ENCODE measurements at regions of chr17 and their contacts with region 1.

Region 1: GRCh38 chr17:56819431-56820145 is 14.1 kb downstream of the C17orf67 start:
- DNase-seq: peak; percentile 88
- H3K4me3 Mint-ChIP-seq: no peak overlapping the region
- H3K27ac Mint-ChIP-seq: no peak overlapping the region
- H3K4me1 Mint-ChIP-seq: peaks cover 8% of the 10 kb centered on the region
- H3K27me3 Mint-ChIP-seq: no peaks in the 10 kb centered on the region

Region 2: GRCh38 chr17:56737366-56738161 is 82.0 kb before region 1 on chr17:
- CTCF ChIA-PET with region 1: no interaction called
- intact Hi-C with region 1: no loop called
- DNase-seq: no peak
- H3K4me3 Mint-ChIP-seq: no peak overlapping the region
- H3K27ac Mint-ChIP-seq: no peak overlapping the region
- H3K4me1 Mint-ChIP-seq: no peaks in the 10 kb centered on the region
- H3K27me3 Mint-ChIP-seq: no peaks in the 10 kb centered on the region

Region 3: DNA sequence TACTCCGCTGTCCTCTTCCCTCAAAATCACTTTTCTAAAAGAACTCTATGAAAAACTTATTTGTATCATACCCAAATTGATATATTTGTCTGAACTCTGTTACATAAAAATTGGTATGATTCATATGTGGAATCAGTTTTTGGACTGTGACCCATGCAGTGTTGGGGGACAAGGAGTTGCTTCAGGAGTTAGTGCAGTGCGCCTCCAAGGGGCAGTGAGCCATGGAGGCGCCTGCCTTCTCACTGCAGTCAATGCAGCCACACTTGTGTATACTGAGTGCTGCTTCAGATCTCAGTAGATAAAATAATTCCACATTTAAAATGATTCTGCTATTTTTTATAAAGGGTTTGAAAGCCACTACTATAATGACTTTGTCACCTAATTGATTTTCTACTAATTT is 46.9 kb after region 1 on chr17:
- CTCF ChIA-PET with region 1: interaction called, 3 read pairs
- intact Hi-C with region 1: loop called (anchors 2 kb)
- DNase-seq: peak; percentile 15
- H3K4me3 Mint-ChIP-seq: no peak overlapping the region
- H3K27ac Mint-ChIP-seq: no peak overlapping the region
- H3K4me1 Mint-ChIP-seq: peaks cover 9% of the 10 kb centered on the region
- H3K27me3 Mint-ChIP-seq: no peaks in the 10 kb centered on the region

Region 4: DNA sequence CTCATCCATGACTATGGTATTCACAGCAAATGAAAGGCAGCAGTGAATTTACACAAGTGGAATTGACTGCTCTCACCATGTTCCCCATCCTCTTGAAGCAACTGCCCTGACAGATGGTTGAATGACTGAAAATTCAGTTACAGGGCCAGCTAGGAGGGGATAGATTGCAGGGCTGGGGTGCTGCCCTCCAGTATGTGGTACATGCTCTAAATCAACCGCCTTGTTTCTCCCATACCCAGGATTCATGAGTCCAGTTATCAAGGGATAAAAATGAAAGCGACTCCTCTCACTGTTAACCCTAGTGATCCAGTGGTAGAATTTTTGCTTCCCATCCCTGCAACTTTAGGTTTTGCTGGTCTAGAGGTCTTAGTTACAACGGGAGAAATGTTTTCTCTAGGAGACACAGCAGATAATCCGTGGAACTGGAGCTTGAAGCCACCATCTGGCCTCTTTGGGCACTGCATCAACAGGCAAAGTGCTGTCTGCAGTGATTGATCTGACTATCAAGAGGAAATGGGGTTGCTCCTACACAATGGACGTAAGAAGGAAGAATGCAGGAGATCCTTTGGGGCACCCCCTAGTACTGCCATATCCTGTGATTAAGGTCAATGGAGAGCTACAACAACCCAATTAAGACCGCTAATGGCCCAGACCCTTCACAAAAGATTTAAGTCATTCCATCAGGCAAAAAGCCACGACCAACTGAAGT is 190.3 kb after region 1 on chr17:
- CTCF ChIA-PET with region 1: interaction called, 7 read pairs
- intact Hi-C with region 1: loop called (anchors 1 kb)
- DNase-seq: peak; percentile 80
- H3K4me3 Mint-ChIP-seq: peak overlapping the region; percentile 1
- H3K27ac Mint-ChIP-seq: no peak overlapping the region
- H3K4me1 Mint-ChIP-seq: peaks cover 6% of the 10 kb centered on the region
- H3K27me3 Mint-ChIP-seq: no peaks in the 10 kb centered on the region

Measured in activated naive CD4-positive, alpha-beta T cell treated with anti-CD3 and anti-CD28 coated beads for 36 hours (primary cell).